PC-9 (cell line): ENCODE measurements at regions of chrX and their contacts with region 1.

Region 1: DNA sequence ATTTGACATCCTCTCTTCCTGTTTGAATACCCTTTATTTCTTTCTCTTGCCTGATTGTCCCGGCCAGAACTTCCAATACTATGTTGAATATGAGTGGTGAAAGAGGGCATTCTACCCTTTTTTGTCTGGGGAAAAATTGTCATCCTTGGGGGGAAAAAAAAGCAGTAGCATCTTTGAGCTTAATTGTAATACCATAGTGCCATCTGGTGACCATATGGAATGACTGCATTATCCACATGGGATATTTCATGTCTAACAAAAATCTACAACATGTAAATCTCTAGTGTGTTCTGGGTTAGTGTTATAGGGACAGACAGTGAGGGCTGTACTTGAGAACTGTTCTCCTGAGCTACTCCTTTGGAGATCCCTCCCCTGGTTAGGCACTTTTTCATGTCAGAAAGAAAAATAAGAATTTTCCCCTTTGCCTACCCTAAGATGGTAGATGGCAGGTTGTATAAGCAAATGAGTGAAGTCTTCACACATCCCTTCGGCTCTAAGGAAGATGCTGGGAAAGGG is 26.0 kb downstream of the CAPN6 start:
- DNase-seq: no peak
- H3K4me3 ChIP-seq: no peak overlapping the region
- H3K27ac ChIP-seq: no peak overlapping the region
- H3K4me1 ChIP-seq: no peaks in the 10 kb centered on the region
- H3K27me3 ChIP-seq: peaks cover 36% of the 10 kb centered on the region
- CTCF ChIP-seq: peak; percentile 73

Region 2: GRCh38 chrX:110442640-110443039 is 801.7 kb before region 1 on chrX:
- CTCF ChIA-PET with region 1: no interaction called
- POLR2A ChIA-PET with region 1: no interaction called
- intact Hi-C with region 1: loop called (anchors 10 kb)
- DNase-seq: peak in 1 of 2 experiments; percentile 19
- H3K4me3 ChIP-seq: no peak overlapping the region
- H3K27ac ChIP-seq: no peak overlapping the region
- H3K4me1 ChIP-seq: no peaks in the 10 kb centered on the region
- H3K27me3 ChIP-seq: 0 out of 2 replicates have a peak, but pooled peaks cover 14% of the 10 kb centered on the region
- CTCF ChIP-seq: peak; percentile 66

Region 3: GRCh38 chrX:111181951-111182350 is 62.3 kb before region 1 on chrX:
- CTCF ChIA-PET with region 1: no interaction called
- POLR2A ChIA-PET with region 1: no interaction called
- intact Hi-C with region 1: no loop called
- DNase-seq: no peak
- H3K4me3 ChIP-seq: no peak overlapping the region
- H3K27ac ChIP-seq: no peak overlapping the region
- H3K4me1 ChIP-seq: no peaks in the 10 kb centered on the region
- H3K27me3 ChIP-seq: no peaks in the 10 kb centered on the region
- CTCF ChIP-seq: no peak